ENCODE measurements at regions of chr4 and their contacts with region 1.

Region 1: DNA sequence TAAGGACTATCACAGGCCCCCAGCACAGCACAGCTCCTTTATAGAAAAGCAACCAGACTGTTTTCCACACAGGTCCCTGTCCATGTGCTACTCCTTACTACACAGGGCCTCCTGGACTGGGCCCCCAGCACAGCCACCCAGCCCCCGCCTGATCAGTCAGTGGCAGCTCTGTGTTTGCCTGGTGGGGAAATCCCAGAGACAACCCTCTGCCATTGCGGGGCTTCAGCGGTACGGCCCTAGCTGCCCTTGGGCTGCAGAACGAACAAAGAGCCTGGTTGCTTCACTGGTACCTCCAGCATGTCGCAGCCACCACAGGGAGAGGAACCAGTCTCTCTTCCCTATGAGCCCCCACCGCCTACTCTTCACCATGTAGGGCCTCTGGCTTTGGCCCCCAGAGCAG is 30.7 kb downstream of the CBR4 start:
- DNase-seq: no peak
- H3K4me3 ChIP-seq: no peak overlapping the region
- H3K27ac ChIP-seq: no peak overlapping the region
- H3K4me1 ChIP-seq: no peaks in the 10 kb centered on the region
- H3K27me3 ChIP-seq: no peaks in the 10 kb centered on the region
- CTCF ChIP-seq: no peak

Region 2: GRCh38 chr4:168995537-168996295 is 16.4 kb after region 1 on chr4:
- CTCF ChIA-PET with region 1: interaction called, 17 read pairs
- POLR2A ChIA-PET with region 1: no interaction called
- intact Hi-C with region 1: no loop called
- DNase-seq: peak; percentile 27
- H3K4me3 ChIP-seq: no peak overlapping the region
- H3K27ac ChIP-seq: no peak overlapping the region
- H3K4me1 ChIP-seq: peaks cover 13% of the 10 kb centered on the region
- H3K27me3 ChIP-seq: no peaks in the 10 kb centered on the region
- CTCF ChIP-seq: peak; percentile 37; the same call in 1 of the 2 replicates

Measured in A673 (cell line).